CD14-positive monocyte (primary cell): ENCODE measurements at regions of chr7 and their contacts with region 1.

Region 1: GRCh38 chr7:45917658-45918057 is 3.4 kb downstream of the IGFBP3 start:
- DNase-seq: peak; percentile 9 to 45 (median 19)
- H3K4me3 ChIP-seq: no peak overlapping the region
- H3K4me3 Mint-ChIP-seq: peak overlapping the region in 1 of 2 donors; percentile 21
- H3K27ac ChIP-seq: no peak overlapping the region
- H3K27ac Mint-ChIP-seq: no peak overlapping the region
- H3K4me1 ChIP-seq: no peaks in the 10 kb centered on the region
- H3K4me1 Mint-ChIP-seq: peaks cover 4% of the 10 kb centered on the region
- H3K27me3 ChIP-seq: peaks cover 38 to 44% of the 10 kb centered on the region in 2 donors
- H3K27me3 Mint-ChIP-seq: peaks cover 37 to 58% (median 51%) of the 10 kb centered on the region in 3 donors
- CTCF ChIP-seq: peak; percentile 96

Region 2: GRCh38 chr7:47179812-47180515 is 1262.3 kb after region 1 on chr7:
- intact Hi-C with region 1: loop called (anchors 2 to 5 kb)
- DNase-seq: peak in 2 of 3 donors; percentile 39 to 42
- H3K4me3 ChIP-seq: no peak overlapping the region
- H3K4me3 Mint-ChIP-seq: no peak overlapping the region
- H3K27ac ChIP-seq: no peak overlapping the region
- H3K27ac Mint-ChIP-seq: no peak overlapping the region
- H3K4me1 ChIP-seq: no peaks in the 10 kb centered on the region
- H3K4me1 Mint-ChIP-seq: no peaks in the 10 kb centered on the region
- H3K27me3 ChIP-seq: no peaks in the 10 kb centered on the region
- H3K27me3 Mint-ChIP-seq: peaks cover 3 to 7% (median 5%) of the 10 kb centered on the region in 3 donors
- CTCF ChIP-seq: peak; percentile 70

Region 3: DNA sequence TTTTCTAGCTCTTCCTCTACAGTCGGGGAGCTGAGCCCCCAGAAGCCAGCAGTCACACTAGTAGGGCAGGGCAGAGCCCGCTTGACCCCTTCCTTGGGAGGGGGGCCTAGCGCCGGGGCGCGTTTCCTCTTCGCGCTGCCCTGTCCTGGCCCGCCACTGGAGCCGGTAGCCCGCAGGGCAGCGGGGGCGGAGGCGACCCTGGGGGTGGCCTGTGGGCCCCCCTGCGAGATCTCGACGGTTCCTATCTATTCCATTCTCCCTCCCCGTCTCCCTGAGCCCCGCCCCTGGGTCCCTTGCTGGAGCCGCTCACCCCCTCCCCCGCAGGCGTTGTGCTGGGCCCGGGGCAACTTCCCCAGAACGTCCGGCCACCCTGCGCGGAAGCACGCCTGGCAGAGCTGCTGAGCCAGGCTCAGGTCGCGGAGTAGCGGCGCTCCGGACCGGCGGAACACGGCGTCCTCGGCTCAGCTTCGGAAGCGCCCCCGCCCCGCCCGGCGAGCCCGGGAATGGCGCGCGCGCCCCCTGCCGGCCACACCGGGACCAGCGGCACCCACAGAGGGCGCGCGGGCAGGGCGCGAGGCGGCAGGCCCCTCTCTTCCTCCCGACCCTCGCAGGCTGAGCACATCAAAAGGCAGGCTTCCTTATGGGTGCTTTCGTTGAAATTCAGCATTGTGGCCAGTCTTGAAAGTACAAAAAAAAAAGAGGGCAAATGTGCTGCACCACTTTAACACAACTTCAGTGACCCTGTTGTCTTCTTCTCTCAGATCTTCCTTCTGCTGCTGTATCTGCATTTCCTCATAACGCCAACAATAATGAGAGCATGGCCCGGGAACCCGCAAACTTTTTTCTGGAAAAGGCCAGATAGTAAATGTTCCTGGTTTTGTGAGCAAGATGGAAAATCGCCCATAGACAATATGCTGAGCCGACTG is 1336.7 kb after region 1 on chr7:
- intact Hi-C with region 1: loop called in 1 of 2 experiments (anchors 5 kb)
- DNase-seq: peak; percentile 57 to 74 (median 58)
- H3K4me3 ChIP-seq: peak overlapping the region; percentile 44 to 77 (median 57)
- H3K4me3 Mint-ChIP-seq: peak overlapping the region; percentile 78 to 89
- H3K27ac ChIP-seq: no peak overlapping the region
- H3K27ac Mint-ChIP-seq: peak overlapping the region in 2 of 7 donors; percentile 3 to 69
- H3K4me1 ChIP-seq: peaks cover 14 to 19% of the 10 kb centered on the region in 2 donors
- H3K4me1 Mint-ChIP-seq: peaks cover 22% of the 10 kb centered on the region
- H3K27me3 ChIP-seq: no peaks in the 10 kb centered on the region
- H3K27me3 Mint-ChIP-seq: peaks cover 7 to 10% (median 8%) of the 10 kb centered on the region in 3 donors
- CTCF ChIP-seq: peak; percentile 97